ENCODE measurements at regions of chr4 and their contacts with region 1.

Region 1: DNA sequence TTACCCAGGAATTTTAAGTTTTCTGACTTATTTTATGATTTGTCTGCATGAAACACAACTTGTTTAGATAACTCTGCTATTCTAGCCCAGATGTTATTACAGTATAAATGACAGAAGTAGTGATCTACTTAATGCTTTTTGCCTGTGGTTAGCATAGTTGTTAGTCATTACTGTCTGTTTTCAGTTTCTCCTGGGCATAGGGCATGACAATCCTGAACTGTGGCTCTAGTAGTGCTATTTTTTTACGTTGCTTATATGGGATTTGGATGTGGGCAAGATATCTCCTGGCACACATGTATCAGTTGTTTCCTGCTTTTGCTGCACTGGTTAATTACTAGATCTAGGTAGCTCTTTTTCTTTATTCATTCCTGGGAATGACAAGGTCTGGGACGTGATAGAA is 1005.8 kb downstream of the PCDH18 start:
- DNase-seq: no peak
- ATAC-seq: peak; percentile 73
- H3K4me3 ChIP-seq: no peak overlapping the region
- H3K27ac ChIP-seq: no peak overlapping the region
- H3K4me1 ChIP-seq: no peaks in the 10 kb centered on the region
- H3K27me3 ChIP-seq: no peaks in the 10 kb centered on the region
- CTCF ChIP-seq: no peak
- EP300 ChIP-seq: no peak
- POLR2A ChIP-seq: no peak
- RAD21 ChIP-seq: no peak

Region 2: GRCh38 chr4:136516371-136516770 is 10.1 kb before region 1 on chr4:
- CTCF ChIA-PET with region 1: interaction called, 3 read pairs
- POLR2A ChIA-PET with region 1: no interaction called
- RAD21 ChIA-PET with region 1: interaction called, 4 read pairs
- SMC1A ChIA-PET with region 1: interaction called, 19 read pairs
- in situ Hi-C with region 1: no loop called
- intact Hi-C with region 1: no loop called
- DNase-seq: no peak
- ATAC-seq: no peak
- H3K4me3 ChIP-seq: no peak overlapping the region
- H3K27ac ChIP-seq: no peak overlapping the region
- H3K4me1 ChIP-seq: no peaks in the 10 kb centered on the region
- H3K27me3 ChIP-seq: no peaks in the 10 kb centered on the region
- CTCF ChIP-seq: no peak
- EP300 ChIP-seq: no peak
- POLR2A ChIP-seq: no peak
- RAD21 ChIP-seq: no peak

Measured in GM12878 (cell line).